Right cardiac atrium (tissue), 5 donors: ENCODE measurements at regions of chr18 and their contacts with region 1.

Region 1: GRCh38 chr18:50218432-50219197 is 23.7 kb upstream of the MYO5B start:
- DNase-seq: no peak
- ATAC-seq: peak in 1 of 2 donors; percentile 40
- H3K4me3 ChIP-seq: no peak overlapping the region
- H3K27ac ChIP-seq: no peak overlapping the region
- H3K4me1 ChIP-seq: no peaks in the 10 kb centered on the region
- H3K27me3 ChIP-seq: no peaks in the 10 kb centered on the region

Region 2: GRCh38 chr18:50356036-50356945 is 137.7 kb after region 1 on chr18:
- intact Hi-C with region 1: loop called in 1 of 4 experiments (anchors 10 kb)
- DNase-seq: no peak
- ATAC-seq: peak in 1 of 2 donors; percentile 47
- H3K4me3 ChIP-seq: no peak overlapping the region
- H3K27ac ChIP-seq: no peak overlapping the region
- H3K4me1 ChIP-seq: no peaks in the 10 kb centered on the region
- H3K27me3 ChIP-seq: no peaks in the 10 kb centered on the region

Region 3: DNA sequence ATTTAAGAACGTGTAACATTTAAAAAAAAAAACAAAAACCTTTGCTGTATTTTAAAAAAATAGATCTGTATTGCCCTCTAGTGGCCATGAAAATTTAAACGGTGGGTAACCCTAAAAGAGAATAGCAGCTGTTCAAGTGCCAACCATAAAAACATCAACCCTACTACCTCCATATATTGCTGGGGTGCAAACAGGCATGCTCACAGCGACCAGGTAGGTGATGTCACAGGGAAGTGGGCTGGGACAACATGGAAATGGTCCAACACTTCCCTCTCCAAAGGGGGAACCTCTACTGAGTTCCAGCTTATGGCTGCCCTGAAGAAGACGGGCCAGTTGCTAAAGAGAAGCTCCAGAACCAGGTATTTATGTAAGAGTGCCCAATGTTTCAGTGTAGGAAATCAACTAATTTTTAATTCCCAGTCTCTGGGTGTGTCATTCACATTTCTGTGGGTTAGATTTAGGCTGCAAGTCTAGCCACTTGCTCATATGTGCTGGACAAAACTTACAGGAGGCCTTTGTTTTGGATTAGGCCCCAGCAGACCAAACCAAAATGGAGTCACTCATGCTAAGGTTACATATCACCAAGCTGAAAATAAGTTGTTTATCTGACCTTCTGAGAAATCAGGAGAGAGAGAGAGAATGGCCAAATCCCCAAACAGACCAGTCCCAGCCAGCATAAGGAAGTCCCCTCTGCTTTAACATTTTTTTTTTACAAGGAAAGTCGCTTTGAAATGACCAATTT is 210.8 kb after region 1 on chr18:
- intact Hi-C with region 1: loop called in 1 of 4 experiments (anchors 5 kb)
- DNase-seq: no peak
- ATAC-seq: no peak
- H3K4me3 ChIP-seq: no peak overlapping the region
- H3K27ac ChIP-seq: no peak overlapping the region
- H3K4me1 ChIP-seq: no peaks in the 10 kb centered on the region
- H3K27me3 ChIP-seq: no peaks in the 10 kb centered on the region